Mammary epithelial cell (primary cell): ENCODE measurements at regions of chr4 and their contacts with region 1.

Region 1: GRCh38 chr4:48085821-48086607 is 48.0 kb downstream of the TXK start:
- DNase-seq: no peak
- H3K4me3 ChIP-seq: no peak overlapping the region
- H3K27ac ChIP-seq: no peak overlapping the region
- H3K4me1 ChIP-seq: peaks cover 5% of the 10 kb centered on the region
- H3K27me3 ChIP-seq: no peaks in the 10 kb centered on the region
- CTCF ChIP-seq: no peak

Region 2: DNA sequence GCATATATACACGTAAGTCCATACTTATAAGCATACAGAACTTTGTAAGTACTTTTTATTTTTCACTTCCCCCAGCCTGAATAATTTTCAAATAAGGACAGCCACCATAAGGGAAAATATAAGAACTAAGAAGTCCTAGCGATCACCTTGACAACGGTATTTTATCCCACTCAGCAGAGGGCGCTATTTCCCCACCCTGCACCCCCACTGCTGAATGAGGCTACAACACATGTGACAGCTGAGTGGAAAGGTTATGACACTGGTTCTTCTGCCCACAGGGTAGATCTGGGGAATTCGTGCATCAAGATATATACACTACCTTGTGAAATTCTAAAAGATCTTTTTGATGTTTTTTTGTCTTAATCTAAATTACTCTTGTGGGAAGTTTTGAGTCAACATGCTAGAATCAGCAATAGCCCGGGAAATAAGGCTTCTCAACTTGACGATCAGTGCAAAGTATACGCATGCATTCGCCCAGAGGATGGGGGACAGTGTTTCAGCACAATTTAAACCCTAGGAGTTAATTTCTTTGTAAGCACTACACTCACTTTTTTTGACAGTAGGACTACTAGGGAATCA is 399.6 kb before region 1 on chr4:
- CTCF ChIA-PET with region 1: no interaction called
- dilution Hi-C with region 1: no loop called
- in situ Hi-C with region 1: loop called in 1 of 2 experiments (anchors 25 kb)
- intact Hi-C with region 1: loop called (anchors 5 kb)
- DNase-seq: peak; percentile 28
- H3K4me3 ChIP-seq: no peak overlapping the region
- H3K27ac ChIP-seq: no peak overlapping the region
- H3K4me1 ChIP-seq: no peaks in the 10 kb centered on the region
- H3K27me3 ChIP-seq: peaks cover 4% of the 10 kb centered on the region
- CTCF ChIP-seq: peak; percentile 84 to 87

Region 3: DNA sequence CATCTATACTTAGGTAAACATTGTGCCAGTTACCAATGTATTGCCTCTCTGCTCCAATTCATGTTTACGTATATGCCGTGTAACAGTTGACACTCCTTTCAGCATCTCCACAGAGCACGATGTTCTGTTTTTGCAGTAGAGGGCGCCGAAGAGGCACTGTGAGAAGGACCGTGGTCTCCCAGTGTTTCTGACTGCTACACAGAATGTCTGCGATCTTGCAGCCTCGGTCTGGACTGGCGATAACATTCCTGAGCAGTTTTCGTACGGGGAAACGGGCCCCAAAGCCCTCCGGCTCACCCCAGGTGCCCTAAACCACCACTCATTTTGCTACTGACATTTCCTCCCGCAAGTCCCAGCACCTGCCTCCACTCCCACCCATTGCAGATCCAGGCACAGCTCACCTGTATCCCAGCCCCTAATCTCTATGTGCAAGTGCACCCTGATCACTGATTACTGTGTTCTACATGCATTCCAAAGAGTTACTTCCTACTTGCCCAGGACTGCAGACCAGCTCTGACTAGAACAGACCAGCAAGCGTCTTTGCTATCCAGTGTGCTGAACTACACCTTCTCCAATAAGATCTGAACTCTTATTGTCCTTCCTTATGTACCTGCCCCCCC is 159.3 kb before region 1 on chr4:
- CTCF ChIA-PET with region 1: no interaction called
- dilution Hi-C with region 1: no loop called
- in situ Hi-C with region 1: loop called in 1 of 2 experiments (anchors 10 kb)
- intact Hi-C with region 1: loop called (anchors 5 kb)
- DNase-seq: peak; percentile 43
- H3K4me3 ChIP-seq: peak overlapping the region in 1 of 3 experiments; percentile 29
- H3K27ac ChIP-seq: no peak overlapping the region
- H3K4me1 ChIP-seq: peaks cover 8% of the 10 kb centered on the region
- H3K27me3 ChIP-seq: no peaks in the 10 kb centered on the region
- CTCF ChIP-seq: peak; percentile 74 to 86

Region 4: DNA sequence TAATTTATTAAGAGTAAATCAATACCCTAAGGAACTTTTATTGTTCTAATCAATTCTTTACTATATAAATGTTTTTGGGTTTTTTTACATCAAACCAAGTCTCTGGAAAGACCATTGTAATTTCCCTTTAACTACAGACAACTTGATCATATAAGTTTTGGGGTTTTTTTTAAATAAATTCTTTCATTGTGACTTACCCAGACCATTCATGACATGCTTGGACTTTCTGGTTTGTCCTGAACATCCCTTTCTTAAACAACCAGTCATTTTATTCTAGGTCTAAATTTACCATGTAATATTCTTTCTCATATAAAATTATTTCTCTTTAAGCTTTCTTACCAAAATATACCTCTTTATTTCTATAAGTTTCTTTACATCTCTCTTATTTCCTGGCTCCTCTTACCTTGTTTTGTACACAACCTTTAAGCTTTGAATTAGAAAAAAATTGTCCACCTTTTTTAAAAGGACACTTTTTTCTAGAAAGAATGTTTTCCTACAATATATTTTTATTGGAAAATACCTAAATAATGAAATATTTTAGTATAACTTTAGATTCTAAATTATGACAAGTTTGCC is 77.9 kb before region 1 on chr4:
- CTCF ChIA-PET with region 1: no interaction called
- dilution Hi-C with region 1: no loop called
- in situ Hi-C with region 1: no loop called
- intact Hi-C with region 1: loop called (anchors 1 kb)
- DNase-seq: peak; percentile 21
- H3K4me3 ChIP-seq: no peak overlapping the region
- H3K27ac ChIP-seq: no peak overlapping the region
- H3K4me1 ChIP-seq: no peaks in the 10 kb centered on the region
- H3K27me3 ChIP-seq: no peaks in the 10 kb centered on the region
- CTCF ChIP-seq: no peak

Region 5: DNA sequence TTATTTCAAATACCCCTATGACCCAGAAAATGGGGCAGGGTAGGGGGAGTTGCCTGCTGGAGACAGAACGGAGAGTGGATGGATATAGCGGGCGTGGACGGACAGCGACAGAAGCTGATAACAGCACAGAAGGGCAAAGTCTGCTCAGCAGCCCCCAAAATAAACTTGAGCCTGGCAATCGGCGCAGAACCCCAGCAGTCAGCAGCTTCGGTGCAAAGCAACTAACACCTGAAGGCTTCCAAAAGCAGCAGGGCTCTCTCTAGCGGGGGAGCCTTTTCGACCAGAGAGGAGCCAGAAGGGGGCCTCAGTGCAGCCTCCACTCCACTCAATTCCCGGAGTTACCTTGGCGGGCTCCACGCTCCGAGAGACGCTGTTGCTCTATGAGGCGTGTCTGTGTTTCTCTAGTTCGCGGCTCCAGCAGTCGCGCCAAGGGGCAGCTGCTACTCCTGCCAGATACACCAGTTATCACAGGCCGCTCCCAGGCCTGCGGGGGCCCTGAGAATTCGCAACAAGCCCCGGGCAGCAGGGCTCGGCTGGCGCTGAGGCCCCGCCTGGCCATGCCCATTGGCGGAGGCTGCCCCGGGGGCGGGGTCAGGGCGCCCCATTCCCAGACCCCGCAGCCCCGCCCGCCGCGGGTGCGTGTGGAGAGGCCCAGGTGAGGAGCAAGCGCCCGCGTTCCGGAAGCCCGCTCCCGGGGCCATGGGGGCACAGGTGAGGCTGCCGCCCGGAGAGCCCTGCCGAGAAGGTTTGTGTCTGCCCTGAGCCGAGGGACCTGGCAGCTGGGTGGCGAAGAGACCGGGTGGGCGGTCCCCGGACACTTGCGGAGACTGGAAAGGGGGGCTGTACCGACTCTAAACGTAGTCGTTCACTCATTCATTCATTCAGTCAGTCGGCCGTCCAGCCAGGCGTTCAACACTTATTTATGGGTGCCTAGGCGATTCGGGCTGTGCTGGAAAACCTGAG is 69.6 kb before region 1 on chr4 and contains the starts of genes CNGA1 and NIPAL1:
- CTCF ChIA-PET with region 1: no interaction called
- dilution Hi-C with region 1: no loop called
- in situ Hi-C with region 1: no loop called
- intact Hi-C with region 1: loop called (anchors 5 kb)
- DNase-seq: peak; percentile 94
- H3K4me3 ChIP-seq: peak within 1 kb of the TSS; percentile 73 to 86 (median 75)
- H3K27ac ChIP-seq: peak within 1 kb of the TSS; percentile 99
- H3K4me1 ChIP-seq: peaks cover 9% of the 10 kb centered on the region
- H3K27me3 ChIP-seq: no peaks in the 10 kb centered on the region
- CTCF ChIP-seq: peak; percentile 9 to 42
- total RNA-seq, gene CNGA1: 0.12 to 0.17 TPM
- total RNA-seq, gene NIPAL1: 11.7 to 19.9 TPM

Region 6: DNA sequence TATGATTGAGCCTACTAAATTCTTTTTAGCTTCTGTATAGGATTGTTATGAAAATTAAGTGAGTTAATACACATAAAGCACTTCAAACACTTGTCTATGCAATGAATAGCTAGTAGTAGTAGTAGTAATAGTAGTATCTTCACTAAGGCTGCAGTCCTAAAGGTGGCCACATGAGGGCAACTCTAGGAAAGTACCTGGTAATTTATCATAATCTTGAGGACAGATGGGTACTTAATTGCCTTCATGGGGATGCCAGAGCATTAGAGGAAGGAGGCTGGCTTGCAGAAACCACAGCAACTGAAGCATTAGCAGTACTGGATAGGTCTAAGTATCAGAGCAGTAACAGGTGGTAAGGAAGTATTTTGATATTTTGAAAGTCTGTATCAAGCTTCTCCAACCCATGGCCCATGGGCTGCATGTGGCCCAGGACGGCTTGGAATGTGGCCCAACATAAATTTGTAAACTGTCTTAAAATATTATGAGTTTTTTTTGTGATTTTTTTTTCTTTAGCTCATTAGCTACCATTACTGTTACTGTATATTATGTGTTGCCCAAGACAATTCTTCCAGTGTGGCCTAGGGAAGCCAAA is 52.1 kb before region 1 on chr4:
- CTCF ChIA-PET with region 1: interaction called, 5 read pairs
- dilution Hi-C with region 1: no loop called
- in situ Hi-C with region 1: no loop called
- intact Hi-C with region 1: loop called (anchors 2 kb)
- DNase-seq: peak; percentile 34
- H3K4me3 ChIP-seq: no peak overlapping the region
- H3K27ac ChIP-seq: no peak overlapping the region
- H3K4me1 ChIP-seq: no peaks in the 10 kb centered on the region
- H3K27me3 ChIP-seq: no peaks in the 10 kb centered on the region
- CTCF ChIP-seq: peak; percentile 73 to 76